Mucosa of descending colon (tissue), 3 donors: ENCODE measurements at regions of chr12 and their contacts with region 1.

Region 1: GRCh38 chr12:93380480-93381121 is 2.9 kb downstream of the NUDT4 start:
- DNase-seq: no peak
- ATAC-seq: no peak
- H3K4me3 ChIP-seq: no peak overlapping the region
- H3K4me1 ChIP-seq: peaks cover 28% of the 10 kb centered on the region
- CTCF ChIP-seq: no peak

Region 2: DNA sequence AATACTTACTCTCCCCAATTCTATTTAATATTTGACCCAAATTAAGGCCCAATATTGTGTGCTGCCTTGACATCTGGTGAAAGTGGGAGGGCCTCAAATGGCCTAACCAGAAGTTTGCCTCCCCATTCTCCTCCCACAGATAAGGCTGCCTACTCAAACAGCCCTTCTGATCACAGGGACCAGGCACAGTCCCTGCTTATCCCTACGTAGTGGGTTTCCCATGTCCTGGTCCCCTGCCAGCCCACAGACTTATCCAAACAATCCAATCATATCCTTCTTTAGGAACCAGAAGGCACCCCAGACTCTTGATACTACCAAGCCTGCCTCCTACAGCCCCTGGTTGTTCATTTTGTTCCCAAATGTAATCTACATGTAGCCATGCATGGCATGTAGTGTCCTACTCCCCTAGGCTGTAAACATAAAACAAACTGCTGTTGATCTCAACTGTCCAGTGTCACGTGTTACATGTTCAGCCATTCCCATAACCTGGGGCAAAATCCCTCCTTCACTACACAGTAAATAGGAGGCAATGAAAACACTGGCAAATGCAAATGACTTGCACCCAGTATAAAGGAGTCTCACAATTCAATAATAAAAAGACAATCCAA is 500.8 kb before region 1 on chr12:
- intact Hi-C with region 1: no loop called
- DNase-seq: no peak
- ATAC-seq: no peak
- H3K4me3 ChIP-seq: no peak overlapping the region
- H3K4me1 ChIP-seq: no peaks in the 10 kb centered on the region
- CTCF ChIP-seq: no peak

Region 3: DNA sequence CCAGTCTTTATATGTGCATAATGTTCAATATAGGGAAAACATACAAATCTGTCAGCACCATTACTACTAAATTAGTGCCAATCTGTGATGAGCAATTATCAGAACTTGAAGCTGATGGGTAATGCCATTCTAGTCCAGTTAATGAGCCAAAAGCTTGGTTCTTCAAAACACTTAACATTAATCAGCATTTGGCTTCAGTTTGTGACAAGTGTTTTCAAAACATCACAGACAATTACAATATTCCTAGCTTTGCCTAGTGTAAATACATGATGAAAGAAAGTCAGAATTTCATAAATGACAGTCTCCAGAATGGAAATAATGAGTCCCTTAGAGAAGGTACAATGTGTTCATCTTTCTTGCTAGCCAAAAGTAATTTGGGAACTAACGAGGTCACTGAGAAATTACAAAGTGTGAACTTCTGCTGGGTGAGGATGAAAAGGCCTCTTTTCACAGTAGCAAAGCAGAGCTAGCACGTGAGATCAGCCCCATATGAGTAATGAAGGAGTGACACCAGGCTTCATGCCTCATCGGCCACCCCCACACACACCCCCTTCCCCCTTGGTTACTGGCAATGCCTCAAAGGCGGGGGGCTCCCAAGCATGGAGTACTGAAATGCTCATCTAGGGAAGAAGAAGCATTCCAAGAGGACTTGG is 270.9 kb before region 1 on chr12:
- intact Hi-C with region 1: loop called in 1 of 2 experiments (anchors 10 kb)
- DNase-seq: no peak
- ATAC-seq: no peak
- H3K4me3 ChIP-seq: no peak overlapping the region
- H3K4me1 ChIP-seq: no peaks in the 10 kb centered on the region
- CTCF ChIP-seq: no peak

Region 4: GRCh38 chr12:94025756-94026155 is 645.2 kb after region 1 on chr12:
- intact Hi-C with region 1: no loop called
- DNase-seq: no peak
- ATAC-seq: no peak
- H3K4me3 ChIP-seq: no peak overlapping the region
- H3K4me1 ChIP-seq: no peaks in the 10 kb centered on the region
- CTCF ChIP-seq: no peak